ENCODE measurements at regions of chr7 and their contacts with region 1.

Region 1: GRCh38 chr7:151782598-151783448 is 94.1 kb downstream of the PRKAG2 start:
- DNase-seq: peak; percentile 83
- ATAC-seq: peak; percentile 93
- H3K4me3 Mint-ChIP-seq: peak overlapping the region; percentile 82
- H3K27ac Mint-ChIP-seq: peak overlapping the region; percentile 91
- H3K4me1 Mint-ChIP-seq: peaks cover 7% of the 10 kb centered on the region
- H3K27me3 Mint-ChIP-seq: no peaks in the 10 kb centered on the region

Region 2: DNA sequence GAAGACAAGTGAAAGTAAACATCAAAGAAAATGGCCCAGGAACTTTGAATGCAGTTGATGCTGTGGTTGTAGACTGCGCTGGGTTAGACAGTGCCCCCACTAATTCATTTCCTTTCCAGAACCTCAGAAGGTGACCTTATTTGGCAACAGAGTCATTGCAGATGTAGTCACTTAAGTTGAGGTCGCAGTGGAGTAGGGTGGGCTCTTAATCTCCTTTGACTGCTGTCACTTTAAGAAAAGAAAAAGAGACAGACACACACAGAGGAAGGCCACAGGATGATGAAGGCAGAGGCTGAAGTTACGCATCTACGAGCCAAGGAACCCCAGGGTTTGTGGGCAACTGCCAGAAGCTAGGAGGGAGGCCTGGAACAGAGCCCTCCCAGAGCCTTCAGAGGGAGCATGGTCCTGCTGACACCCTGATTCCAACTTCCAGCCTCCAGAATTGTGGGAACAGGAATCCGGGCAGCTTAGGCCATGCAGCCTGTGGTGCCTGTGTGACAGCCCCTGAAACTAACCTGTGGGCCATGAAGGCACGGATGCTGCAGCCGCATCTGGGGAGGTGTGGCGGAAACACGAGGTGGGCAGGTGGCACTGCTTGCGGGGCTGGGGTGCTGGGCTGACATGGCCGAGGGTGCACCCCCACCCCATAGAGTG is 13.5 kb before region 1 on chr7:
- POLR2A ChIA-PET with region 1: interaction called, 16 read pairs
- DNase-seq: peak; percentile 74
- ATAC-seq: peak; percentile 97
- H3K4me3 Mint-ChIP-seq: peak overlapping the region; percentile 81
- H3K27ac Mint-ChIP-seq: peak overlapping the region; percentile 99
- H3K4me1 Mint-ChIP-seq: peaks cover 45% of the 10 kb centered on the region
- H3K27me3 Mint-ChIP-seq: no peaks in the 10 kb centered on the region

Measured in activated naive CD8-positive, alpha-beta T cell treated with anti-CD3 and anti-CD28 coated beads, Interleukin-2, amount 10 ng/mL, durations not matched to agents 7 days and 5 days (primary cell).